ENCODE measurements at regions of chr14 and their contacts with region 1.

Region 1: DNA sequence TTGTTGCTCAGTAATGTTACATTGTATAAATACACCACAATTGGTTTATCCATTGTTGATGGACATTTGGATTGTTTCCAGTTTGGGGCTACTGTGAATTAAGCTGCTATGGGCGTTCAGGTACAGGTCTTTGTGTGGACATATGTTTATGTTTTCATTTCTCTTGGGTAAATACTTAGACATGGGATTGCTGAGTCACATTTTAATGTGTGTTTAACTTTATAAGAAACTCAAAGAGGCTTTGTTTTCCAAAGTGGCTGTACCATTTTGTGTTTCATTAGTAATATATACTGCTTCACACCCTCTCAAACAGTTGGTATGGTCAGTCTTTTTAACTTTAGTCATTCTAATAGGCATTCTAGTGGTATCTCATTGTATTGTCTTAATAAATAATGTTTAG is 225.0 kb downstream of the SPTSSA start:
- DNase-seq: no peak
- ATAC-seq: no peak
- H3K4me3 ChIP-seq: no peak overlapping the region
- H3K27ac ChIP-seq: no peak overlapping the region
- H3K4me1 ChIP-seq: no peaks in the 10 kb centered on the region
- H3K27me3 ChIP-seq: no peaks in the 10 kb centered on the region; a peak in 1 of 4 replicates
- CTCF ChIP-seq: no peak
- EP300 ChIP-seq: no peak
- POLR2A ChIP-seq: no peak
- RAD21 ChIP-seq: no peak

Region 2: GRCh38 chr14:34247605-34248004 is 10.5 kb after region 1 on chr14:
- CTCF ChIA-PET with region 1: interaction called, 14 read pairs
- POLR2A ChIA-PET with region 1: no interaction called
- RAD21 ChIA-PET with region 1: interaction called, 3 read pairs
- SMC1A ChIA-PET with region 1: interaction called, 9 read pairs
- in situ Hi-C with region 1: no loop called
- intact Hi-C with region 1: no loop called
- DNase-seq: no peak
- ATAC-seq: no peak
- H3K4me3 ChIP-seq: no peak overlapping the region
- H3K27ac ChIP-seq: no peak overlapping the region
- H3K4me1 ChIP-seq: no peaks in the 10 kb centered on the region
- H3K27me3 ChIP-seq: no peaks in the 10 kb centered on the region
- CTCF ChIP-seq: no peak
- EP300 ChIP-seq: no peak
- POLR2A ChIP-seq: no peak
- RAD21 ChIP-seq: no peak

Measured in GM12878 (cell line).